ENCODE measurements at regions of chr3 and their contacts with region 1.

Region 1: GRCh38 chr3:62622553-62623193 is 249.3 kb upstream of the FEZF2 start:
- DNase-seq: peak in 2 of 10 donors; percentile 22 to 40
- H3K4me3 ChIP-seq: no peak overlapping the region
- H3K27ac ChIP-seq: peak overlapping the region in 2 of 59 donors; percentile 7 to 46
- H3K27me3 ChIP-seq: no peaks in the 10 kb centered on the region
- CTCF ChIP-seq: peak; percentile 63 to 93 (median 78)

Region 2: GRCh38 chr3:61601831-61602230 is 1020.8 kb before region 1 on chr3:
- intact Hi-C with region 1: no loop called
- DNase-seq: no peak
- H3K4me3 ChIP-seq: no peak overlapping the region
- H3K27ac ChIP-seq: no peak overlapping the region
- H3K27me3 ChIP-seq: no peaks in the 10 kb centered on the region
- CTCF ChIP-seq: no peak

Region 3: GRCh38 chr3:63193629-63194028 is 571.0 kb after region 1 on chr3:
- intact Hi-C with region 1: loop called in 1 of 2 experiments (anchors 2 kb)
- DNase-seq: no peak
- H3K4me3 ChIP-seq: no peak overlapping the region
- H3K27ac ChIP-seq: no peak overlapping the region
- H3K27me3 ChIP-seq: no peaks in the 10 kb centered on the region
- CTCF ChIP-seq: peak; percentile 36 to 85 (median 60)

Region 4: DNA sequence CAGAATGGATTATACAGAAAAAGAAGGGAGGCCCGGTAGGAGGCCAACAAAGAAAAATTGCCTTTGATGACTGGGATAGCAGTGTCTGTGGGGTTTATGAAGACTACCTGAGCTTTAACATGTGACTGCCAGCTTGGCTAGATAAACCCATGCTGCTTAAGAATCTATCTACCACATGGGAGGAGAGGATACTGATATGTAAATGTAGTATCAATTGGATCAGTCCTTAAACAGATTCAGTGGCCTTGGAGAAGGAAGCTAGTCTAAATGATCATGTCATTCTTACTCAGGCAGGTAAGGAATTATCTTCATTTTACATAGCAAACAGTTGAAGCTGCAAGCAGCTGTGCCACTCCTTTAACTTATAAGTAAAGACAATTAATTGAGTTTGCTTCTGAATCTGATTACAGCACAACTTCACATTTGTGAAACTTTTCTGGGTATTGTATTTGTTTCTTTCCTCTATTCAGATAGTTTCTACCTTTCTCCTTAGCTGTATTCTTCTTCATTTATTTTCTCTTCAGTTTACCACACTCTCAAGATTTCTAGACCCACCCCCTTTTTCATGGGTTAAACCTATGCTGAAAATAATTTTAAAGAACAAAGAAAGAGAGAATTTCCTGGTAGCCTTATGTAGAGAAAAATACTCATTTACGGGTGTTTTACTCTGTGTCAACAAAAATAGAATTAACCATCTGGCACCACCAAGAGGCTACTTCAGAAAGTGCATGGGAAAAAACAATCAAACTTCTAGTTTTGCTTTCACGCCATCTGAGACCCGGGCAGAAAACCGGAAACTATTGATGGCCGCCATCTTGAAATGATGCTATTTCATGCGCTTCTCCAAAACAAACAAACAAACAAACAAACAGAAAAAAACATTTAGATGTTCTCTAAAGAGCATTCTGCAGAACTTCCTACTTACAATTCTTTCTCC is 605.7 kb after region 1 on chr3:
- intact Hi-C with region 1: loop called in 1 of 2 experiments (anchors 5 kb)
- DNase-seq: peak in 3 of 10 donors; percentile 27 to 48 (median 44)
- H3K4me3 ChIP-seq: peak overlapping the region in 18 of 59 donors; percentile 7 to 40 (median 25)
- H3K27ac ChIP-seq: peak overlapping the region in 1 of 59 donors; percentile 44
- H3K27me3 ChIP-seq: peaks cover 0 to 17% (median 0%) of the 10 kb centered on the region in 45 donors
- CTCF ChIP-seq: peak; percentile 37 to 74 (median 62)